AG04450 (cell line): ENCODE measurements at regions of chr12 and their contacts with region 1.

Region 1: GRCh38 chr12:85872497-85873091 is 1.5 kb upstream of the NTS start:
- DNase-seq: peak; percentile 13
- H3K4me3 ChIP-seq: no peak overlapping the region
- H3K27ac ChIP-seq: no peak overlapping the region
- H3K27me3 ChIP-seq: no peaks in the 10 kb centered on the region
- CTCF ChIP-seq: peak; percentile 88

Region 2: DNA sequence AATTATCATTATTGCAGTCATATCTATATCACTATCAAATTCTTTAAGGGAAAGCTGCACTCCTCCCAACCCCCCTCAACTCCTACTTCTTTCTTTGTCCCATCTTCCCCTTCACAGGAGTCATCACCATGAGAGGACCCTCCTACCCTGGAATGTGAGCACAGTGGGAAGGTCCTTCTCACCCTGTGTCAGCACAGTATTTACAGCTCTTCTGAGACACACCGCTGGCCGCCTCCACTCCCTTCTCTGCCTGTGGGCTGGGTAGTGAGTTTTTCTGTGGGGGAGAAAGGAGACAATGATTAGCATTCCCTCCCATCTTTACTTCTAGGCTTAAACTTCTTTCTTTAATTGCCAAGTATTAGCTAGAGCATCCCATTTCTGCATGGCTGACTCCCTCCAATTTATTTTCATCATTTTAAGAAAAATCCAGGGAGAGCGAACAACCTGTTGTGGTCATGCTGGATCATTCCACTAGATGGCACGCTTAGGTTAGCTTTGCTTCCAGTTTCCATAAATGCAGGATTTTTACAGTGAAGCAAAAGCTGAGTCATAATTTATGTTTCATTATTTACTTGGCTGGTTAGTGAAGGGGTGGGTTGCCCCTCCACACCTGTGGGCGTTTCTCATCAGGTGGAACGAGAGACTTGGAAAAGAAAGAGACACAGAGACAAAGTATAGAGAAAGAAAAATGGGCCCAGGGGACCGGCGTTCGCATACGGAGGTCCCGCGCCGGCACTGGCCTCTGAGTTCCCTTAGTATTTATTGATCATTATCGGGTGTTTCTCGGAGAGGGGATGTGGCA is 404.0 kb before region 1 on chr12:
- CTCF ChIA-PET with region 1: interaction called, 68 read pairs
- POLR2A ChIA-PET with region 1: no interaction called
- DNase-seq: peak; percentile 8
- H3K4me3 ChIP-seq: peak overlapping the region; percentile 43
- H3K27ac ChIP-seq: no peak overlapping the region
- H3K27me3 ChIP-seq: no peaks in the 10 kb centered on the region
- CTCF ChIP-seq: peak; percentile 86

Region 3: GRCh38 chr12:85883763-85884162 is 11.2 kb after region 1 on chr12:
- CTCF ChIA-PET with region 1: interaction called, 15 read pairs
- POLR2A ChIA-PET with region 1: no interaction called
- DNase-seq: no peak
- H3K4me3 ChIP-seq: no peak overlapping the region
- H3K27ac ChIP-seq: no peak overlapping the region
- H3K27me3 ChIP-seq: no peaks in the 10 kb centered on the region
- CTCF ChIP-seq: no peak